ENCODE measurements at regions of chr10 and their contacts with region 1.

Region 1: DNA sequence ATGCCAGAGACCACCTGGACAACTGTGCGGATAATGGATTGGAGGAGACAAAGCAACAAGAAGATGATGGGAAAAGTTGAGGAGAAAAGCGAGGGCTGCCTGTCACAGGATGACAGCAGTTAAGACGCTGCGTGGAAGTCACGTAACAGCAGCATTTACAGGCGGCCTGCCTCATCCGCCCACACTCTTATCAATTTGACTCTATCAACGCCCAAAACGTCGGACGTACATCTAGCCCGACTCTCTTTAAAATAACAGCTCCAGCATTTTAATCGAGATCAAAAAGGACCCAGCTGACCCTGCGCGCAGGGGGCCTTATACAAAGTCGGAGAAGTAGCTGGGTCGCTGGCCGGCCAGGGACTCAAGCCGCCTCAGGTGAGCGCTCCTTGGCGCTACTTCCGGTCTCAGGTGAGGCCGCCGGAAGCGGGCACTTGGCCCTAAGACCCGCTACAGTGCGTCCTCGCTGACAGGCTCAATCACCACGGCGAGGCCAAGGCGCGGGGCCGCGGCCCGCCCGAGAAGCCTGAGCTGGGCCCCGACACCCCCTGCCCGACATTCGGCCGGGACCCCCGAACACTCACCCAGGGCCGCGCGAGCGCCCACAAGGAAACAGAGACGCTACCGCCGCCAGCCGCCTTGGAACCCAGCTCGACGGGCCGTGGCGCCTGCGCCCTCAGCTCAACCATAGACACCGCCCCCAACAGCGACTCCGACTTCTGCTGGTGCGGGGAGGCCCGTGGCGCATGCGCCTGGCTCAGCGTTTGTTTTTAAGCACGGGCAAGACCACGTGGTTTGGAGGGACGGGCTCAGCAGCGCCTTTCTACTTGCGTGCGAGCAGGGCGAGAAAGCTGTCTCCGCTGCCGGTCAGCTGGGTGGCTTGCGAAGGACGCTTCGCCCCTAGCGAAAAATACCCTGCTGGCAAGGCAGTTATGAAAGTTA is at the start of gene ERCC6:
- DNase-seq: peak; percentile 96 to 97 (median 96)
- H3K4me3 ChIP-seq: peak within 1 kb of the TSS; percentile 56
- H3K27ac ChIP-seq: peak within 1 kb of the TSS; percentile 9 to 67
- H3K4me1 ChIP-seq: peaks cover 11% of the 10 kb centered on the region
- H3K27me3 ChIP-seq: no peaks in the 10 kb centered on the region
- CTCF ChIP-seq: no peak
- EP300 ChIP-seq: no peak
- POLR2A ChIP-seq: peak; percentile 43
- total RNA-seq, gene ERCC6: 7.1 to 24.1 (median 20.6) TPM

Region 2: GRCh38 chr10:48306265-48306869 is 1232.3 kb before region 1 on chr10 and contains the start of gene MAPK8:
- intact Hi-C with region 1: loop called in 1 of 4 experiments (anchors 10 kb)
- DNase-seq: peak; percentile 91 to 96 (median 95)
- H3K4me3 ChIP-seq: peak within 1 kb of the TSS; percentile 88
- H3K27ac ChIP-seq: peak within 1 kb of the TSS; percentile 85 to 96
- H3K4me1 ChIP-seq: peaks cover 8% of the 10 kb centered on the region
- H3K27me3 ChIP-seq: no peaks in the 10 kb centered on the region
- CTCF ChIP-seq: no peak
- EP300 ChIP-seq: no peak
- POLR2A ChIP-seq: peak; percentile 94
- total RNA-seq, gene MAPK8: 51.2 to 110 (median 68.6) TPM

Region 3: GRCh38 chr10:49734661-49735071 is 196.0 kb after region 1 on chr10:
- intact Hi-C with region 1: no loop called
- DNase-seq: no peak
- H3K4me3 ChIP-seq: no peak overlapping the region
- H3K27ac ChIP-seq: no peak overlapping the region
- H3K4me1 ChIP-seq: no peaks in the 10 kb centered on the region
- H3K27me3 ChIP-seq: no peaks in the 10 kb centered on the region
- CTCF ChIP-seq: no peak
- EP300 ChIP-seq: no peak
- POLR2A ChIP-seq: no peak

Region 4: DNA sequence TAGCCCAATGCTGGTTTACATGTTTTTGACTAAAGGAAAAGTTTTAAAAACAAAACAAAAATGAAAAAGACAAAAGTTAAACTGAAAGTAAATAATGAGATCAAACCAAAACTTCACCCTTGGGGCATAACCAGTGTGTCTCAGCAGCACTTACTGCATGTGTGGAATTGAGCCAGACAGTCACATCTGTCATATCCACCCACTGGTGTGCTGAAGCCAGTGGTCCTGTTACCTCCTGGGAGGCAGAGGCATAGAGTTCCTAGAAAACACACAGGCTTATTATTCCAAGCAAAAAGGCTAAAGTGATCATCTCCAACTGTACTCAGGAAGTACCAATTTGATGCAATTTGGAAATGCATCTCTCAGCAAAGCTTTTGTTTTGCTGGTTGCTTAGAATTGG is 672.2 kb after region 1 on chr10:
- intact Hi-C with region 1: no loop called
- DNase-seq: no peak
- H3K4me3 ChIP-seq: no peak overlapping the region
- H3K27ac ChIP-seq: no peak overlapping the region
- H3K4me1 ChIP-seq: no peaks in the 10 kb centered on the region
- H3K27me3 ChIP-seq: no peaks in the 10 kb centered on the region
- CTCF ChIP-seq: no peak
- EP300 ChIP-seq: no peak
- POLR2A ChIP-seq: no peak

Measured in ovary (tissue), 10 donors.